Activated CD8-positive, alpha-beta T cell treated with anti-CD3 and anti-CD28 coated beads, Interleukin-2, amount 10 ng/mL, durations not matched to agents 7 days and 5 days (primary cell): ENCODE measurements at regions of chr5 and their contacts with region 1.

Region 1: DNA sequence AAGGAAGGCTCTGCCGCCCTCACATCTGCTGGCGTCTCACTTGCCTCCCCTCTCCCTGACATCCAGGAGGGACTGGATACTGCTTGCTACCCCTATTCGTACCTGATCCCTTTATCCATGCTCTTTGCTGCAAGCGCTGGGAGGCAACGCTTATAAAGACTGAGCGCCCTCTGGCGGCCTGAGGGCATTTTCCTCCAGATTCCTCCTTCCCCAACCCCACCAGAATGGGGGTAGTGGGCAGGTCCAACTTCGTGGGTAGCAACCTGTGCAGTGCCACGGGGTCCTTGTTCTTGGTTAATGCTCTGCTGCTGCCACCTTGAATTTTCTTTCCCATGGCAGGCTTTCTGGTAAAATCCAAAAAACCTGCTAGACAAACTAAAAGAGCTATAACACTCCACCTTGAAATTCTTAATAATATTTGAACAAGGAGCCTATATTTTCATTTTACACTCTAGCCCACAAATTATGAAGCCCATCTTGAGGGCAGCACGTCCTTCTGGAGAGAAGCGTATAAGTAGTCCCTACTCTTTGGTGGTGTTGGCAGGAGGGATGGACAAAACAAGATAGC is 52.4 kb downstream of the JADE2 start:
- DNase-seq: peak; percentile 81
- ATAC-seq: peak; percentile 74
- H3K4me3 Mint-ChIP-seq: no peak overlapping the region
- H3K27ac Mint-ChIP-seq: peak overlapping the region; percentile 30
- H3K4me1 Mint-ChIP-seq: peaks cover 3% of the 10 kb centered on the region
- H3K27me3 Mint-ChIP-seq: no peaks in the 10 kb centered on the region

Region 2: GRCh38 chr5:134304311-134304710 is 273.6 kb before region 1 on chr5:
- CTCF ChIA-PET with region 1: interaction called, 14 read pairs
- POLR2A ChIA-PET with region 1: no interaction called
- DNase-seq: no peak
- ATAC-seq: no peak
- H3K4me3 Mint-ChIP-seq: no peak overlapping the region
- H3K27ac Mint-ChIP-seq: no peak overlapping the region
- H3K4me1 Mint-ChIP-seq: peaks cover 7% of the 10 kb centered on the region
- H3K27me3 Mint-ChIP-seq: no peaks in the 10 kb centered on the region

Region 3: DNA sequence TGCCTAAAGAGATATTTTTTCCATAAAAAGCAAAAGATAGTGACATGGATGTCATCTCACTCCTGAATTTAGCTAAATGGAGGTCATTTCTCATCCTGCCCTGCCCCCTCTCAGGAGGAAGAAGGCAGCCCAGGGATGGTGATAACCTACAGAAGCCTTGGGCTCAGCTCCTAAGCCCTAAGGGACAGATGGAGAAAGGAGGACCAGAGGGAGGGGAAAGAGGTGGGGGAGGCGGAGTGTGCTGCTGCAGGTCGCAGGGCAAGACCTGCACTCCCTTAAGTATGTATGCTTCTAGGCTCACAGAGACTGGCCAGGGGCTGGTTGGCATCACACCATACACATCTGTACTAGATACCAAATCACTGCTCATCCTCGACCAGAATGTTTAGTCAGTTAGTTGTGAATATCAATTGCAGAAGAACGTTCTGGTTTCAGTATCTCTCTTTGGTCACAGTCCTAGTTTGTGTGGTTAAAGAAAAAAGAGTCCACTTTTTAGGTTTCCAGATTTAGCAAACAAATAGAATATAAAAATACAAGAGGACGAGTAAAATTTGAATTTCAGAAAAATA is 147.8 kb before region 1 on chr5:
- CTCF ChIA-PET with region 1: interaction called, 11 read pairs
- POLR2A ChIA-PET with region 1: no interaction called
- DNase-seq: no peak
- ATAC-seq: no peak
- H3K4me3 Mint-ChIP-seq: no peak overlapping the region
- H3K27ac Mint-ChIP-seq: no peak overlapping the region
- H3K4me1 Mint-ChIP-seq: peaks cover 6% of the 10 kb centered on the region
- H3K27me3 Mint-ChIP-seq: peaks cover 7% of the 10 kb centered on the region

Region 4: DNA sequence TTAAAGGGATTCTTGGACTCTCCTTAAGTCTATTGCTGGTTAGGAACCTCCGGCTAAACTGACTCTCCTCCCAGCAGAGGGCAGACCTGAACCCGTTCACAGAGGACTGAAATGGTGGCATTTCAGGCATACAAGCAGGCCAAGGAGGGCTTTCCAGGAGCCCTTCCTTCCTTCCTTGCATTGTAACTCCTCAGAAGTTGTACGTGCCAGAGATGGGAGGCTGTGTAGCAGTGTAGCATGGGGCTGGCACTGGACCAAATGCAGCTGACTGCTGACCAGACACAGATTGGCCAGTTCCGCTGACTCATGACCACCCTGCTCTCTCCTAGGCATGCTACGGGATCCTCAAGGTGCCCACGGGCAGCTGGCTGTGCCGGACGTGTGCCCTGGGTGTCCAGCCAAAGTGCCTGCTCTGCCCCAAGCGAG is 16.0 kb before region 1 on chr5:
- CTCF ChIA-PET with region 1: interaction called, 14 read pairs
- POLR2A ChIA-PET with region 1: no interaction called
- DNase-seq: no peak
- ATAC-seq: no peak
- H3K4me3 Mint-ChIP-seq: no peak overlapping the region
- H3K27ac Mint-ChIP-seq: no peak overlapping the region
- H3K4me1 Mint-ChIP-seq: peaks cover 2% of the 10 kb centered on the region
- H3K27me3 Mint-ChIP-seq: no peaks in the 10 kb centered on the region